ENCODE measurements at regions of chr2 and their contacts with region 1.

Region 1: GRCh38 chr2:66429071-66429477 is 5.9 kb upstream of the MEIS1 start:
- DNase-seq: peak in 1 of 2 donors; percentile 8
- ATAC-seq: peak in 2 of 3 donors; percentile 57 to 70
- H3K4me3 ChIP-seq: no peak overlapping the region
- H3K4me3 Mint-ChIP-seq: no peak overlapping the region
- H3K27ac ChIP-seq: no peak overlapping the region
- H3K27ac Mint-ChIP-seq: no peak overlapping the region
- H3K4me1 ChIP-seq: peaks cover 19% of the 10 kb centered on the region
- H3K4me1 Mint-ChIP-seq: peaks cover 13 to 16% of the 10 kb centered on the region in 2 donors
- H3K27me3 ChIP-seq: peaks cover 19% of the 10 kb centered on the region
- H3K27me3 Mint-ChIP-seq: peaks cover 57 to 75% of the 10 kb centered on the region in 2 donors
- CTCF ChIP-seq: peak; percentile 54

Region 2: DNA sequence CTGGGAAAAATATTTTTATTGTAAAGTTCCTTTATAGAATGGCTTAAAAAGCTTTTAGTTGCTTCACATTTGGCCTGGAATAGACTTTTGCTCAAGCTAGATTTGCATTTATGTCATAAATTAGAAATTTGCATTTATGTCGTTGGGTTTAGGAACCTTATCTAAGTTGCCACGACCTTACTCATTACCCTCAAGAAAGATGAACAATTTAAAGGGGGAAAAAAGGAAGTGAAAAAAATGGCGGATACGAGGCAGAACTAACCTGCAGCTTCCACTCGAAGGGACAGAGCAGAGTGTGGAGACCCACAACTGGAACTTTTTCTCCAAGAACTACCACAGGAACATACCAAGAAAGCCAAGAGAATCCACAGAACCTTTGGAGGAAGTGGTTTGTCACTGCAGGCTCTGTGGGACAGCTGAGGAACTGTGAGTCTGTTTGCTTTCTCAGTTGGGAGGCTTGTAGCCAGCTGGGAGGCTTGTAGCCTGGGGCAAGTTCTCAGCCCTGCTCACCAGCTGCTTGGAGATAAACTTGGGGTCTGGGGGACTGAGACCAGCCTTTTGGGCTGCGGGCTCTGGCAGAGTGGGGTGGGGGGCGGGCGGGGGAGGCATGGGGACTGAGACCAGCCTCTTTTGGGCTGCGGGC is 344.0 kb before region 1 on chr2:
- intact Hi-C with region 1: no loop called
- DNase-seq: no peak
- ATAC-seq: no peak
- H3K4me3 ChIP-seq: no peak overlapping the region
- H3K4me3 Mint-ChIP-seq: no peak overlapping the region
- H3K27ac ChIP-seq: no peak overlapping the region
- H3K27ac Mint-ChIP-seq: no peak overlapping the region
- H3K4me1 ChIP-seq: no peaks in the 10 kb centered on the region
- H3K4me1 Mint-ChIP-seq: no peaks in the 10 kb centered on the region
- H3K27me3 ChIP-seq: no peaks in the 10 kb centered on the region
- H3K27me3 Mint-ChIP-seq: no peaks in the 10 kb centered on the region
- CTCF ChIP-seq: no peak

Region 3: GRCh38 chr2:66301022-66301766 is 127.9 kb before region 1 on chr2:
- intact Hi-C with region 1: no loop called
- DNase-seq: no peak
- ATAC-seq: no peak
- H3K4me3 ChIP-seq: no peak overlapping the region
- H3K4me3 Mint-ChIP-seq: no peak overlapping the region
- H3K27ac ChIP-seq: no peak overlapping the region
- H3K27ac Mint-ChIP-seq: no peak overlapping the region
- H3K4me1 ChIP-seq: no peaks in the 10 kb centered on the region
- H3K4me1 Mint-ChIP-seq: no peaks in the 10 kb centered on the region
- H3K27me3 ChIP-seq: no peaks in the 10 kb centered on the region
- H3K27me3 Mint-ChIP-seq: no peaks in the 10 kb centered on the region
- CTCF ChIP-seq: no peak

Region 4: GRCh38 chr2:66445925-66446860 is 17.1 kb after region 1 on chr2:
- intact Hi-C with region 1: no loop called
- DNase-seq: no peak
- ATAC-seq: no peak
- H3K4me3 ChIP-seq: peak overlapping the region; percentile 7
- H3K4me3 Mint-ChIP-seq: no peak overlapping the region
- H3K27ac ChIP-seq: no peak overlapping the region
- H3K27ac Mint-ChIP-seq: no peak overlapping the region
- H3K4me1 ChIP-seq: peaks cover 9% of the 10 kb centered on the region
- H3K4me1 Mint-ChIP-seq: no peaks in the 10 kb centered on the region
- H3K27me3 ChIP-seq: peaks cover 16% of the 10 kb centered on the region
- H3K27me3 Mint-ChIP-seq: peaks cover 27 to 38% of the 10 kb centered on the region in 2 donors
- CTCF ChIP-seq: no peak

Region 5: GRCh38 chr2:66724241-66724640 is 295.2 kb after region 1 on chr2:
- intact Hi-C with region 1: no loop called
- DNase-seq: no peak
- ATAC-seq: no peak
- H3K4me3 ChIP-seq: no peak overlapping the region
- H3K4me3 Mint-ChIP-seq: no peak overlapping the region
- H3K27ac ChIP-seq: no peak overlapping the region
- H3K27ac Mint-ChIP-seq: no peak overlapping the region
- H3K4me1 ChIP-seq: no peaks in the 10 kb centered on the region
- H3K4me1 Mint-ChIP-seq: no peaks in the 10 kb centered on the region
- H3K27me3 ChIP-seq: no peaks in the 10 kb centered on the region
- H3K27me3 Mint-ChIP-seq: no peaks in the 10 kb centered on the region
- CTCF ChIP-seq: no peak

Region 6: GRCh38 chr2:67650291-67651133 is 1221.4 kb after region 1 on chr2:
- intact Hi-C with region 1: loop called (anchors 5 kb)
- DNase-seq: peak in 1 of 2 donors; percentile 46
- ATAC-seq: peak; percentile 61 to 86 (median 83)
- H3K4me3 ChIP-seq: no peak overlapping the region
- H3K4me3 Mint-ChIP-seq: peak overlapping the region; percentile 14
- H3K27ac ChIP-seq: no peak overlapping the region
- H3K27ac Mint-ChIP-seq: peak overlapping the region in 1 of 2 donors; percentile 42
- H3K4me1 ChIP-seq: peaks cover 5% of the 10 kb centered on the region
- H3K4me1 Mint-ChIP-seq: peaks cover 42 to 43% of the 10 kb centered on the region in 2 donors
- H3K27me3 ChIP-seq: no peaks in the 10 kb centered on the region
- H3K27me3 Mint-ChIP-seq: no peaks in the 10 kb centered on the region
- CTCF ChIP-seq: peak; percentile 56

Measured in natural killer cell (primary cell).